Colonic mucosa (tissue), 4 donors: ENCODE measurements at regions of chr11 and their contacts with region 1.

Region 1: GRCh38 chr11:41461057-41461681 is 1.7 kb upstream of the LRRC4C start:
- DNase-seq: no peak
- H3K4me3 ChIP-seq: no peak overlapping the region
- H3K27ac ChIP-seq: no peak overlapping the region
- H3K4me1 ChIP-seq: no peaks in the 10 kb centered on the region
- H3K27me3 ChIP-seq: no peaks in the 10 kb centered on the region
- CTCF ChIP-seq: peak; percentile 78

Region 2: DNA sequence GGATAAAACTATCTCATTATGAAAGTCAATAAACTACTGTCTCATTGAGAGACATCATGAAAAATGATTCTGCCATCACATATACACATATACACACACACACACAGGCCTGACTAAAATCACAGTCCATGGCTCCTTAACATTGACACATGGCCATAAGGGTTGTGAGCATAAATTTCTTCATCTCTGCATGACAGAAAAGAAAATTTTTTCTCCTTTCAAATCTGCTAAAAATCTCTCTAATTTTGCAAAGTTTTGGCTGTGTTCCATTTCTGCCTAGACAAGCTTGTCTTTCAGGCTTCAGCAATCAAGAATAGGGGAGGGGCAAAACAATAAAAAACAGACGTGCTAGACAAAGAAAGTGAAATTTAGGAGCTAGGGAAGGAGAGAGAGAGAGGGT is 326.2 kb before region 1 on chr11:
- intact Hi-C with region 1: no loop called
- DNase-seq: no peak
- H3K4me3 ChIP-seq: no peak overlapping the region
- H3K27ac ChIP-seq: no peak overlapping the region
- H3K4me1 ChIP-seq: no peaks in the 10 kb centered on the region
- H3K27me3 ChIP-seq: no peaks in the 10 kb centered on the region
- CTCF ChIP-seq: no peak

Region 3: GRCh38 chr11:41346042-41346441 is 115.1 kb before region 1 on chr11:
- intact Hi-C with region 1: no loop called
- DNase-seq: no peak
- H3K4me3 ChIP-seq: no peak overlapping the region
- H3K27ac ChIP-seq: no peak overlapping the region
- H3K4me1 ChIP-seq: no peaks in the 10 kb centered on the region
- H3K27me3 ChIP-seq: no peaks in the 10 kb centered on the region
- CTCF ChIP-seq: no peak

Region 4: DNA sequence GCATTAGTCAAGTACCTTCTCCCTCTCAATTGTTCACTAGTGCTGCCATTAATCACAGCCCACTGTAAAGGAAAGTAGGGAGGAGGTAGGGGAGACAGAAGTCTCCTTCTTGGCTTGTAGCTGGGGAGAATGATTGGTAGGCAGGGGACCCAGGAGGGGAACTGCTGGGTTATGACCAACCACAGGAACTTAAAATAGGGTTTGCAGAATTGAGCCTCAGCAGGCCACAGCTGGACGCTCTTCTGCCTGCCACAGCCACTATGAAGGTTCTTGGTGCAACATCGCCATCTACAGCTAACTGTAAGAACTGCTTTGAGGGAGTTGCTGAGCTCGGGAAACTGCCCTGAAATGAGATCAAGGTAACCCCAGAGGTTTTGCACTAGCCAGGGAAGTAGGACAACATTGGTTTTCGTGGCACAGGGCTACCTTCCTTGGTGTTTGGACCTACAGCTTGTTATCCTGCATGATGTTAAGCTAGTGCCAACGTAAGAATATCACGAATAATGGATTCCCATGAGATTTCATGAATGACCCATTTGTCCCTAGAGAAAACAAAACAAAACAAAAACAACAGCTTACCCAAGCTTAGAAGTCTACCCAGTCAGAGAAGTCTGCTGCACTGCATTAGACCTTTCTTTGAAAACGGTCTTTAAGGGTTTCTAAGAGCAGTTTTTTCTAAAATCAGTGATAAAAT is 1063.5 kb after region 1 on chr11:
- intact Hi-C with region 1: loop called (anchors 5 kb)
- DNase-seq: peak; percentile 42
- H3K4me3 ChIP-seq: no peak overlapping the region
- H3K27ac ChIP-seq: no peak overlapping the region
- H3K4me1 ChIP-seq: no peaks in the 10 kb centered on the region
- H3K27me3 ChIP-seq: no peaks in the 10 kb centered on the region
- CTCF ChIP-seq: peak; percentile 71

Region 5: DNA sequence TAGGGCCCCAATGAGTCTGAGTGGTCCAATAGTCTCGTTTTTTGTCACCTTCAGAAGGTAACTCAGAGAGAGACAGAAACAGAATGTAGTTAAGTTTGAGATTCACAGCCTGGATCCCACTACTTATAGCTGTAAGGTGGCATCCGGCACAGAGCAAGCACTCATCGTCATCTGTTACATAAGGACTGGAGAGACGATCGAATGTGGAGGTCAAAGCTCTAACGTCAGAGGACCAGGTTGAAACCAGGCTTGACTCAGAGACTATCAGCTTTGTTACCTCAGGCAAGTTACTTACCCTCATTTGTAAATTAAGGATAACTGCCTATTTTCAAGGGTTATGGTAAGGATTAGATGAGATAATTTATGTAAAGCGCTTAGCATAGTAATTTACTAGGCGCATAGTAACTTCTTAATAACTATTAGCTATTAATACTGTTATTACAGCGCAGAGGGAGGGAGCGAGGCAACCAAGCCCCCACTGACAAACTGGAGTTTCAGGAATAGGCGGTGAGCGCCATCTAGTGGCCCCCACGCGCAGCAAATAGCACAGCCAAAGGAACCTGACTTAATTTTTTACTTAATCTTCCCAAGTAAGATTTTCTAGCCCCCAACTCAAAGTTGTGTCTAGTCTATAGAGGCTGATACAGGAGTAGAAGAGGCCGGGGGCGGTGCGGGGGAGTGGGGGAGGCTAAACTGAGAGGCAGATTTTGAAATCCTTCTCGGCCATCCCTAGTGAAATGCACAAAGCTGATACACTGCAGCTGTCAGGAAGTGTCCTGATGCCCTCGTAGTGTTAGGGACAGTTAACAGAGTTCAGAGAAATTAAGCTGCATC is 1821.7 kb after region 1 on chr11:
- intact Hi-C with region 1: loop called (anchors 10 kb)
- DNase-seq: no peak
- H3K4me3 ChIP-seq: no peak overlapping the region
- H3K27ac ChIP-seq: no peak overlapping the region
- H3K4me1 ChIP-seq: no peaks in the 10 kb centered on the region
- H3K27me3 ChIP-seq: no peaks in the 10 kb centered on the region
- CTCF ChIP-seq: peak; percentile 85